ENCODE measurements at regions of chr9 and their contacts with region 1.

Region 1: DNA sequence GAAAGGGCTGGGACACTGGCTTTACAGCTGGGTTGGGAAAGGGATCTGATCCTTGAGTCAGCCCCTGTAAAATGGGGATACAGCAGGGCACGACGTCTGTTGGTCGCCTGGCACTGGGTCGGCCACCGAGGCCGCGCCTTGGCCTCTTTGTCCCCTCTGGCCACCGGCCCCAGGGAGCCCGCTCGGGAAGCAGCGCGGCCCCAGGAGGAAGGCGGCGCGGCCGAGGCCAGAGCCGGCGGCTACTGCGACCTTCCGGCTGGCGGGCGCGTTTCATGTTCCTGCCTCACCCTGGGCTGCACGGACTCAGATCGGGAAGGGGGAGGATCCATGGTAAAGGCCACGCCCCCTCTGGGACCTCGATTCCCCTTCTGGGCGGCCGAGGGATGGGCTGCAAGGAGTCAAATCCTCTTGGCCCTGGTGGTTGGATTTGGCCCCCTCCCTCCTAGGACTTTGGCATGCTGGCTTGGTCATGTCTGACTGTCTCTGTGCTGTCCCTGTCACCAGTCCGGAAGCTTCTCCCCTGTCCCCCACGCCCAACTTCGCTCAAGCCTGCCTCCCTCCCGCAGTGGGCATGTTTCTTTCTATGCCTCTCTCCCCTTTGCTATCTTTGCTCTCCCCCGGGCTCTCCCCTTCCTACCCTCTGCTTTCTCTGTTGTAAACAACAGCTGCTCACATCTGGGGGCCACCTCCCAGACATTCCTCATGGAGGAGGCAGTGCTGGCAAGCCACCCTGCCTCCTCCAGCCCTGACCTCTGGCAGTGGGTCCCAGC is 25.8 kb downstream of the FPGS start:
- DNase-seq: peak; percentile 96 to 98 (median 97)
- H3K4me3 ChIP-seq: peak overlapping the region; percentile 32
- H3K27ac ChIP-seq: peak overlapping the region; percentile 82 to 96
- H3K4me1 ChIP-seq: peaks cover 38% of the 10 kb centered on the region
- H3K27me3 ChIP-seq: no peaks in the 10 kb centered on the region
- CTCF ChIP-seq: peak in 1 of 3 donors; percentile 21
- EP300 ChIP-seq: no peak
- POLR2A ChIP-seq: peak; percentile 78

Region 2: GRCh38 chr9:127035951-127036350 is 792.5 kb before region 1 on chr9:
- intact Hi-C with region 1: no loop called
- DNase-seq: peak; percentile 56 to 79 (median 69)
- H3K4me3 ChIP-seq: no peak overlapping the region
- H3K27ac ChIP-seq: peak overlapping the region; percentile 4 to 83
- H3K4me1 ChIP-seq: peaks cover 16% of the 10 kb centered on the region
- H3K27me3 ChIP-seq: no peaks in the 10 kb centered on the region
- CTCF ChIP-seq: no peak
- EP300 ChIP-seq: no peak
- POLR2A ChIP-seq: no peak

Region 3: DNA sequence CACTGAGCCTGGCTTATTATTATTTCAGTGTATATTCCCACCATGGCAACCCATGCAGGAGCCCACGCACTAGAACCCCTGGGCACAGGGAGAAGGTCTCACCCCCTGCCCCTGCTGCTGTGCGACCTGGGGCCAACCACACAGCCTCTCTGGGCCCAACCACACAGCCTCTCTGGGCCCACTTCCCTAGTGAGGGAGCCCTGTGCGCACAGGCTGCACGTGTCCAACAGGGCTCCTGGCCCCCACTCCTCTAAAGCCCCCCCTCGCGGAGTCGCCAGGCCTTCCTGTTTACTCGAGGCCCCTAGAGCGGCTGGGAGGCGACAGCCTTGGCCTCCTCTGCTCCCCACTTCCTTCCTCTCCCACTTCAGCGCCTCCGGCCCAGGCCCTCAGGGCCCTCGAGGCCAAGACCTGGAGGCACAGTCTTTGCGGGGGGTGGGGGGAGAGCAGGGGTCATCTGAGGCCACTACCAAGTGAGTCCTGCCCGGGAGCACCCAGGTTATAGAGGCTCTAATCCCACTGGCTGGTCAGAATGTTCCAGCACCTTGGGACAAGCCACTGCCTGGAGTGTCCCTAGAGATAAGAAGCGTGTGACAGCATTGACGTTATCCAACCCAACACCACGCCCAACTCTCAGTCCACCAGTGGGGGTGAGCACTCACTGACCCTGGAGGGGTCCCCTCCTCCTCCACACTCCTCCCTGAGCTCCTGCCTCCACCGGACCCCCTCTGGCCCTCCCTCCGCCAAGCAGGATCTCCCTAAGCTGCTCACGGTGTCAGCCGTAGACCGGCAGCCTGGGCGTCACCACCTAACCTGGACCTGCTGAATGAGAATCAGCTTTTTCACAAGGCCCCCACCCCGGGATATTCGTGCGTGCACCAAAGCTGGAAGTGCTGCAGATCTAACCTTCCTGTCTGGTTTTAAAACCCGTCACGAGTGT is 33.9 kb after region 1 on chr9:
- intact Hi-C with region 1: loop called in 2 of 4 experiments (anchors 5 kb)
- DNase-seq: peak; percentile 78 to 84 (median 82)
- H3K4me3 ChIP-seq: no peak overlapping the region
- H3K27ac ChIP-seq: peak overlapping the region; percentile 81 to 83
- H3K4me1 ChIP-seq: peaks cover 40% of the 10 kb centered on the region
- H3K27me3 ChIP-seq: no peaks in the 10 kb centered on the region
- CTCF ChIP-seq: no peak
- EP300 ChIP-seq: no peak
- POLR2A ChIP-seq: no peak